ENCODE measurements at regions of chr19 and their contacts with region 1.

Region 1: DNA sequence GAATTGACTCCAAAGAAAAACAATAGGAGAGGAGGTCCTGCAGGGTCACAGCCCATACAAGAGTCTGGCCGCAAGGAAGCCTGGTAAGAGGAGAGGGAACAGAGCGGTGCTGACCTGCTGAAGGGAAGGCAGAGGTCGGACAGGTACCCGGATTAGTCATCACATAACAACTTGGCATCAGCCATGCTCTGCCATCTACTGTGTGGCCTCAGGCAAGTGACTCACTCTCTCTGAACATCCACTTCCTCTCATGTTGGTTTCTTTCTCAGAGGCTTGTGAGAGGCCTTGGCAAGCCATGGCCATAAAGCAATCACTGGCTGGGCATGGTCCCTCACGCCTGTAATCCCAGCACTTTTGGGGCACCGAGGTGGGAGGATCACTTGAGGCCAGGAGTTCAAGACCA is 7.4 kb upstream of the CAPNS1 start:
- DNase-seq: no peak
- ATAC-seq: no peak
- H3K4me3 ChIP-seq: no peak overlapping the region
- H3K27ac ChIP-seq: no peak overlapping the region
- H3K4me1 ChIP-seq: peaks cover 10% of the 10 kb centered on the region
- H3K27me3 ChIP-seq: no peaks in the 10 kb centered on the region
- CTCF ChIP-seq: no peak

Region 2: DNA sequence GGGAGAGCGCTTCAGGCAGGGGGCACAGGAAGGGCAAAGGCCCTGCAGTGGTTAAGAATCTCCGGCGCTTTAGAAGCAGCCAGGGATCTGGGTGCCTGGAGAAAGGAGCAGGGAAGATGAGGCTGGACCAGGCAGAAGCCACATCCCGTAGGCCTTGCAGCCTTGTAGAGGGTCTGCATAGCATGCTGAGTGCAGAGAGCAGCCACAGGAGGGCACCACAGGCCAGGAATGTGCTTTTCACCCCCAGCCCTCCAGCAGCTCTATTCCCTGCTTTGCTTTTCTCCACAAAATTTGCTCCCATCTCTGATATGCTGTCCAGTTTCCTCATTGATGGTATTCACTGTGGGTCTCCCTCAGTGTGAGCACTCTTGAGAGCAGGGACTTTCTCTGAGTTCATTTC is 72.1 kb before region 1 on chr19:
- intact Hi-C with region 1: no loop called
- DNase-seq: peak; percentile 31 to 70
- ATAC-seq: peak; percentile 61 to 95 (median 84)
- H3K4me3 ChIP-seq: no peak overlapping the region
- H3K27ac ChIP-seq: no peak overlapping the region
- H3K4me1 ChIP-seq: peaks cover 13% of the 10 kb centered on the region
- H3K27me3 ChIP-seq: no peaks in the 10 kb centered on the region
- CTCF ChIP-seq: peak; percentile 57

Region 3: GRCh38 chr19:36169084-36169760 is 36.7 kb after region 1 on chr19:
- intact Hi-C with region 1: loop called (anchors 1 to 2 kb)
- DNase-seq: no peak
- ATAC-seq: peak in 1 of 4 donors; percentile 6
- H3K4me3 ChIP-seq: no peak overlapping the region
- H3K27ac ChIP-seq: peak overlapping the region; percentile 39
- H3K4me1 ChIP-seq: peaks cover 4% of the 10 kb centered on the region
- H3K27me3 ChIP-seq: no peaks in the 10 kb centered on the region
- CTCF ChIP-seq: no peak

Region 4: GRCh38 chr19:36236304-36236945 is 103.9 kb after region 1 on chr19:
- intact Hi-C with region 1: no loop called
- DNase-seq: no peak
- ATAC-seq: no peak
- H3K4me3 ChIP-seq: no peak overlapping the region
- H3K27ac ChIP-seq: no peak overlapping the region
- H3K4me1 ChIP-seq: no peaks in the 10 kb centered on the region
- H3K27me3 ChIP-seq: no peaks in the 10 kb centered on the region
- CTCF ChIP-seq: no peak

Measured in psoas muscle (tissue), 8 donors.